ENCODE measurements at regions of chr10 and their contacts with region 1.

Region 1: GRCh38 chr10:86899670-86900276 is 57.6 kb downstream of the MMRN2 start:
- DNase-seq: peak; percentile 10
- H3K4me3 ChIP-seq: no peak overlapping the region
- CTCF ChIP-seq: peak; percentile 65

Region 2: GRCh38 chr10:86693721-86694369 is 205.9 kb before region 1 on chr10:
- CTCF ChIA-PET with region 1: interaction called, 86 read pairs
- POLR2A ChIA-PET with region 1: no interaction called
- DNase-seq: no peak
- H3K4me3 ChIP-seq: no peak overlapping the region
- CTCF ChIP-seq: peak; percentile 66

Region 3: GRCh38 chr10:86757114-86757932 is 142.4 kb before region 1 on chr10:
- CTCF ChIA-PET with region 1: interaction called, 11 read pairs
- POLR2A ChIA-PET with region 1: interaction called, 4 read pairs
- DNase-seq: no peak
- H3K4me3 ChIP-seq: peak overlapping the region; percentile 76
- CTCF ChIP-seq: peak; percentile 3

Region 4: DNA sequence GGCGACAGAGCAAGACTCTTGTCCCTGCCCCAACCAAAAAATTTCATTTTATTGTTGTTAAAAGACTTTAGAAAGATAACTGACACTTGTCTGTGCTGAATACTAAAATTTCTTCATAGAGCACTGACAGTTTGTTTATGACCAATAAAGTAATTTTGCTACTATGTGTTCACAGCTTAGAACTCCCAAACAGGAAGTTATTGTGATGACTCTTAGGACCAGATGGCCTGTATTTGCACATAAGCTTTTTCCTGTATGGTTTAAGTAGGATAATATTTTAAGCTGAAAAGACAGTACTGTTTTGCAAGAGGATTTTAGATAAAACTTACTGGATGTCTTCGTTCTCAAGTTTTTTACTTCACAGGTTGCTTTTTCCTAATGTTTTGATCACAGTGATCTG is 23.0 kb before region 1 on chr10:
- CTCF ChIA-PET with region 1: interaction called, 11 read pairs
- POLR2A ChIA-PET with region 1: no interaction called
- DNase-seq: peak; percentile 14
- H3K4me3 ChIP-seq: no peak overlapping the region
- CTCF ChIP-seq: no peak

Region 5: GRCh38 chr10:86918022-86918471 is 18.3 kb after region 1 on chr10:
- CTCF ChIA-PET with region 1: interaction called, 11 read pairs
- POLR2A ChIA-PET with region 1: no interaction called
- DNase-seq: no peak
- H3K4me3 ChIP-seq: no peak overlapping the region
- CTCF ChIP-seq: no peak

Region 6: GRCh38 chr10:87038786-87039185 is 139.0 kb after region 1 on chr10:
- CTCF ChIA-PET with region 1: no interaction called
- POLR2A ChIA-PET with region 1: no interaction called
- DNase-seq: no peak
- H3K4me3 ChIP-seq: no peak overlapping the region
- CTCF ChIP-seq: no peak

Measured in AG04449 (cell line).